ENCODE measurements at regions of chr12 and their contacts with region 1.

Region 1: GRCh38 chr12:7092229-7092985 is at the start of gene C1R:
- DNase-seq: peak; percentile 55
- H3K4me3 ChIP-seq: peak within 1 kb of the TSS; percentile 21 to 32
- H3K27ac ChIP-seq: peak within 1 kb of the TSS; percentile 66 to 77
- H3K4me1 ChIP-seq: no peaks in the 10 kb centered on the region
- H3K27me3 ChIP-seq: no peaks in the 10 kb centered on the region
- CTCF ChIP-seq: peak; percentile 84 to 93 (median 88)
- POLR2A ChIP-seq: no peak
- total RNA-seq, gene C1R: 104 to 261 TPM

Region 2: GRCh38 chr12:7018350-7019042 is 73.9 kb before region 1 on chr12 and contains the start of gene LPCAT3:
- intact Hi-C with region 1: no loop called
- DNase-seq: peak; percentile 97
- H3K4me3 ChIP-seq: peak within 1 kb of the TSS; percentile 66 to 86
- H3K27ac ChIP-seq: peak within 1 kb of the TSS; percentile 86
- H3K4me1 ChIP-seq: peaks cover 9% of the 10 kb centered on the region
- H3K27me3 ChIP-seq: no peaks in the 10 kb centered on the region
- CTCF ChIP-seq: peak; percentile 76 to 97 (median 91)
- POLR2A ChIP-seq: peak; percentile 93
- total RNA-seq, gene LPCAT3: 59.9 to 86.9 TPM

Region 3: DNA sequence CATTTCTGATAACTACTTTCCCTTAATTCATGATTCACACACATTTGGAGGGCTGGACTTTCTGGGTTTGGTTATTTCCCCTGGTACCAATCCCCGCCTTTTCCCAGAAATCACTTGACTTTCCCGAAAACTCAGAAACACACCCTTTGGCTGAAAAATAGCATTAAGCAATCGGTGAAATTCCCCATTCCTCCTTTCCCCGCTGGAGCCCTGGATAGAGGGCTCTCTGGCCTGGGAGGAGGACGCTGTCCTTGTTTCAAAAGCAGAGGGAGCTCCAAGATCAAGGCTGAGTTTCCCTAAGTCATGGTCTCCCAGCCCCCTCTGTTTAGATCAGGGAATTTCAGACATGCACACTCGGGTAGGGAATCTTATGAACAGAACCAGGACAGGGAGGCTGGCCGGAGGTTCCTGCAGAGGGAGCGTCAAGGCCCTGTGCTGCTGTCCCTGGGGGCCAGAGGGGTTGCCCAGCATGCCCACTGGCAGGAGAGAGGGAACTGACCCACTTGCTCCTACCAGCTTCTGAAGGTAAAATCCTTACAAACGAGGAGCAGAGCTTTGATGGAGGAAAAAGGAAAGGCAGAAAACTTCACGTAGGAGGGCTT is 32.0 kb before region 1 on chr12 and contains the start of gene C1S:
- intact Hi-C with region 1: loop called (anchors 1 kb)
- DNase-seq: peak; percentile 61
- H3K4me3 ChIP-seq: peak within 1 kb of the TSS; percentile 15 to 17
- H3K27ac ChIP-seq: peak within 1 kb of the TSS; percentile 57 to 59
- H3K4me1 ChIP-seq: no peaks in the 10 kb centered on the region
- H3K27me3 ChIP-seq: no peaks in the 10 kb centered on the region
- CTCF ChIP-seq: peak; percentile 42 to 90 (median 78)
- POLR2A ChIP-seq: no peak
- total RNA-seq, gene C1S: 52.7 to 176 TPM

Measured in prostate gland (tissue), 2 donors.